ENCODE measurements at regions of chr16 and their contacts with region 1.

Region 1: GRCh38 chr16:31142109-31143010 is 6.8 kb upstream of the PRSS8 start:
- DNase-seq: peak; percentile 94 to 97 (median 96)
- H3K4me3 ChIP-seq: peak overlapping the region in 1 of 2 donors; percentile 75
- H3K4me3 Mint-ChIP-seq: peak overlapping the region; percentile 63 to 80 (median 74)
- H3K27ac ChIP-seq: peak overlapping the region; percentile 42
- H3K27ac Mint-ChIP-seq: peak overlapping the region; percentile 72 to 94 (median 91)
- H3K4me1 ChIP-seq: peaks cover 15% of the 10 kb centered on the region
- H3K4me1 Mint-ChIP-seq: peaks cover 3 to 14% (median 10%) of the 10 kb centered on the region in 4 donors
- H3K27me3 ChIP-seq: no peaks in the 10 kb centered on the region
- H3K27me3 Mint-ChIP-seq: no peaks in the 10 kb centered on the region

Region 2: DNA sequence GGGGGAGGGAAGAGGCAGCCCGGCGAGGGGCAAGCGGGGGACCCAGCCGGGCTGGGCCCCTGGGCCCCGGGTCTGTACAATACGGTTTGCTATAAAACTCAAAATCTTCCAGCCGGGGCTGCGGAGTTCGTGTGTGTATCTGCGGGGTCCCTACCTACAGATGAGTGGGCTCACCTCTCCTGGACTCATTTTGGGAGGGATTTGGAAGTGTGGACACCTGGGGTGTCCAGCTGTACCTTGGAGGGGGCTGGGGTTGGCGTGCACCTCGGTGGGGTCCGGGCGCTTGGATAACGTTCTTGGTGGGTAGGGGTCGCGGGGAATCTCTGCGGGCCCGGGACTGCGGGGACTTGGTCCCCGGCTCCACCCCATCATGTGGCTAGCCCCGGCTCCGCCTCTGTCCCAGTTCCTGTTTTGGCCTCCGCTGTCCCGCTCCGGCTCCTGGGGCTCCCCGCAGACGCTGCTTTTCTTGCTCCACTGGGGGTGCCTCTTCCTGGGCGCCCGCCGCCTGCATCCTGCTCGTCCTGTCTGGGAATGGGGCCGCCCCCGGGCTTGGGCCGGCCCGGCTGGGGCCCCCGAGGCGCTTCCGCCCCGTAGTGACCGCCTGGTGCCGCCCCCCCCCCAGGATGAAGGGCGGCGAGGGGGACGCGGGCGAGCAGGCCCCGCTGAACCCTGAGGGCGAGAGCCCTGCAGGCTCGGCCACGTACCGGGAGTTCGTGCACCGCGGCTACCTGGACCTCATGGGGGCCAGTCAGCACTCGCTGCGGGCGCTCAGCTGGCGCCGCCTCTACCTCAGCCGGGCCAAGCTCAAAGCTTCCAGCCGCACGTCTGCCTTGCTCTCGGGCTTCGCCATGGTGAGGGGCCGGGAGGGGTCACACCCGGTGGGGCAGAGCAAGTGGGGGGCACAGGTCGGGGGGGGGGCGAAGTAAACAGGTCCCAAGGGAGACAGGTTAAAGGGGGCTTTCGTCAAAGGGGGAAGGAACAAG is 193.4 kb before region 1 on chr16 and contains the start of gene ORAI3:
- CTCF ChIA-PET with region 1: interaction called, 13 read pairs
- POLR2A ChIA-PET with region 1: interaction called, 10 read pairs
- intact Hi-C with region 1: no loop called
- DNase-seq: peak in 4 of 5 donors; percentile 21 to 56 (median 28)
- H3K4me3 ChIP-seq: peak within 1 kb of the TSS; percentile 55 to 80
- H3K4me3 Mint-ChIP-seq: peak within 1 kb of the TSS; percentile 85 to 95 (median 92)
- H3K27ac ChIP-seq: peak within 1 kb of the TSS; percentile 71
- H3K27ac Mint-ChIP-seq: peak within 1 kb of the TSS; percentile 76 to 94 (median 89)
- H3K4me1 ChIP-seq: peaks cover 22% of the 10 kb centered on the region
- H3K4me1 Mint-ChIP-seq: peaks cover 11 to 31% (median 23%) of the 10 kb centered on the region in 4 donors
- H3K27me3 ChIP-seq: no peaks in the 10 kb centered on the region
- H3K27me3 Mint-ChIP-seq: no peaks in the 10 kb centered on the region
- total RNA-seq, gene ORAI3: 19.3 to 22.0 TPM

Region 3: GRCh38 chr16:30997000-30997886 is 145.1 kb before region 1 on chr16:
- CTCF ChIA-PET with region 1: interaction called, 4 read pairs
- POLR2A ChIA-PET with region 1: interaction called, 5 read pairs
- intact Hi-C with region 1: loop called (anchors 1 kb)
- DNase-seq: peak; percentile 59 to 82 (median 66)
- H3K4me3 ChIP-seq: peak overlapping the region; percentile 60 to 69
- H3K4me3 Mint-ChIP-seq: peak overlapping the region; percentile 67 to 86 (median 82)
- H3K27ac ChIP-seq: peak overlapping the region; percentile 47
- H3K27ac Mint-ChIP-seq: peak overlapping the region in 6 of 7 donors; percentile 54 to 89 (median 85)
- H3K4me1 ChIP-seq: peaks cover 11% of the 10 kb centered on the region
- H3K4me1 Mint-ChIP-seq: peaks cover 2 to 6% (median 4%) of the 10 kb centered on the region in 4 donors
- H3K27me3 ChIP-seq: no peaks in the 10 kb centered on the region
- H3K27me3 Mint-ChIP-seq: no peaks in the 10 kb centered on the region

Region 4: DNA sequence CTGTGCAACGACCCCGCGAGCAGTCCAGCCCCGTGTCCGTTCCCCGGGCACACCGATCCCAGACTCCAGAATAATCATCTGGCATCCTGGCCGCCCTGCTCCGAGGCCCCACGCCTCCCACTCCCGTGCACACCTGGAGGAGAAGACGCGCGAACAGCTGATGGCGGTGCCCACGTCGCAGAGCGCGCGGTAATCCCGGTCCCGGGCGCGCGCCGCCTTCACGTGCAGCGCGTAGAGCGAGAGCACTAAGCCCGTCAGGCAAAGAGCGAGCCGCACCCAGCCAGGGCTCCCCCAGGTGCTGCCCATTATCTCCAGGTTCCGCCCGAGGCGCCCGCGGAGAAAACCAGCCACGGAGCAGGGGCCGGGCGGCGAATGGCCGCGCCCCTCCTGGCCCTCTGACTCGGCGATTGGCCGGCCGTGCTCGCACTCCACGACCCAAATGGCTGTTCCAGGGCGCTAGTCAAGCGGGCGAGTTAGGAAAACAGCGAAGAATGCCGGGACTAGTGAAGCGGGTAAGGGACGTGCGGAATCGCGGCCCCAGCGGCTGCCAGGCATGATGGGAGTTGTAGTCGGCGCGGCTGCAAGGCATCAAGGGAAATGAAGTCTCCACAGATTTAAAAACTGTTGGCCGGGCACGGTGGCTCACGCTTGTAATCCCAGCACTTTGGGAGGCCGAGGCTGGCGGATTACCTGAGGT is 47.8 kb before region 1 on chr16 and contains the start of gene VKORC1:
- CTCF ChIA-PET with region 1: interaction called, 6 read pairs
- POLR2A ChIA-PET with region 1: interaction called, 17 read pairs
- intact Hi-C with region 1: loop called (anchors 1 kb)
- DNase-seq: peak; percentile 87 to 92 (median 90)
- H3K4me3 ChIP-seq: peak within 1 kb of the TSS; percentile 63 to 98
- H3K4me3 Mint-ChIP-seq: peak within 1 kb of the TSS; percentile 88 to 96 (median 92)
- H3K27ac ChIP-seq: peak within 1 kb of the TSS; percentile 74
- H3K27ac Mint-ChIP-seq: peak within 1 kb of the TSS; percentile 76 to 99 (median 95)
- H3K4me1 ChIP-seq: peaks cover 22% of the 10 kb centered on the region
- H3K4me1 Mint-ChIP-seq: peaks cover 12 to 42% (median 30%) of the 10 kb centered on the region in 4 donors
- H3K27me3 ChIP-seq: no peaks in the 10 kb centered on the region
- H3K27me3 Mint-ChIP-seq: no peaks in the 10 kb centered on the region
- total RNA-seq, gene VKORC1: 48.9 to 51.3 TPM

Region 5: GRCh38 chr16:31125844-31126243 is 16.5 kb before region 1 on chr16:
- CTCF ChIA-PET with region 1: interaction called, 56 read pairs
- POLR2A ChIA-PET with region 1: interaction called, 121 read pairs
- intact Hi-C with region 1: no loop called
- DNase-seq: no peak
- H3K4me3 ChIP-seq: no peak overlapping the region
- H3K4me3 Mint-ChIP-seq: no peak overlapping the region
- H3K27ac ChIP-seq: no peak overlapping the region
- H3K27ac Mint-ChIP-seq: peak overlapping the region in 2 of 7 donors; percentile 48 to 75
- H3K4me1 ChIP-seq: no peaks in the 10 kb centered on the region
- H3K4me1 Mint-ChIP-seq: peaks cover 0 to 5% (median 0%) of the 10 kb centered on the region in 4 donors
- H3K27me3 ChIP-seq: no peaks in the 10 kb centered on the region
- H3K27me3 Mint-ChIP-seq: no peaks in the 10 kb centered on the region

Region 6: DNA sequence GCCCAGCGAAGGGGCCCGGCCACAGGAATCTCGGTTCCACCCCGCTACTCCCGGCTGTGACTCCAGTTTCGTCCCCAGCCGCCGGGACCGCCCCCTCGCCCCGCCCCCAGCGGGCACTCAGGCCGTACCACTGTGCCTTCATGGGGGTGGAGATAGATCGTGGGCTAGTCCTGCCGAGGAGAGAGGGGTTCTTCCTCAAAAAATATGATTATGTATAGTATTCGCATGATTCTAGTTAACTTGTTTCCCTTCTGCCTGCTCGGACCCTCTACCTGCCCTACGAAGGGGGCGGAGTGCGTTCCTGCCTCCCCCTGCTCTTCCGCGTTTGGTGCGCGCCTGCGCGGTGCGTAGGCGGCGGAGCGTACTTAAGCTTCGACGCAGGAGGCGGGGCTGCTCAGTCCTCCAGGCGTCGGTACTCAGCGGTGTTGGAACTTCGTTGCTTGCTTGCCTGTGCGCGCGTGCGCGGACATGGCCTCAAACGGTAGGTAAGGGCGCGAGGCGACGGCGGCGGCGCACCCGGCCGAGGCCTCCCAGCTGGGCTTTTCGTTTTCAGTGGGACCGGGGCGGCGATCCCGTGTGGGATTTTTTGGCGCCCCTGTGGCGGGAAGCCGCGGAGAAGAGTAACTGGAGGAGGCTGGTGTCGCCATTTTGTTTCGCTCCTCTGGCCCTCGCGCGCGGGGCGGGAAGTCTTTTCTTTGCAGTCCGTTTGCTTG is 37.5 kb after region 1 on chr16 and contains the start of gene FUS:
- CTCF ChIA-PET with region 1: interaction called, 32 read pairs
- POLR2A ChIA-PET with region 1: interaction called, 195 read pairs
- intact Hi-C with region 1: loop called (anchors 1 kb)
- DNase-seq: peak; percentile 89 to 95 (median 94)
- H3K4me3 ChIP-seq: peak within 1 kb of the TSS; percentile 96 to 97
- H3K4me3 Mint-ChIP-seq: peak within 1 kb of the TSS; percentile 97 to 99 (median 98)
- H3K27ac ChIP-seq: peak within 1 kb of the TSS; percentile 89
- H3K27ac Mint-ChIP-seq: peak within 1 kb of the TSS; percentile 95 to 100 (median 99)
- H3K4me1 ChIP-seq: peaks cover 66% of the 10 kb centered on the region
- H3K4me1 Mint-ChIP-seq: peaks cover 41 to 77% (median 54%) of the 10 kb centered on the region in 4 donors
- H3K27me3 ChIP-seq: no peaks in the 10 kb centered on the region
- H3K27me3 Mint-ChIP-seq: no peaks in the 10 kb centered on the region
- total RNA-seq, gene FUS: 500 to 536 TPM

Region 7: DNA sequence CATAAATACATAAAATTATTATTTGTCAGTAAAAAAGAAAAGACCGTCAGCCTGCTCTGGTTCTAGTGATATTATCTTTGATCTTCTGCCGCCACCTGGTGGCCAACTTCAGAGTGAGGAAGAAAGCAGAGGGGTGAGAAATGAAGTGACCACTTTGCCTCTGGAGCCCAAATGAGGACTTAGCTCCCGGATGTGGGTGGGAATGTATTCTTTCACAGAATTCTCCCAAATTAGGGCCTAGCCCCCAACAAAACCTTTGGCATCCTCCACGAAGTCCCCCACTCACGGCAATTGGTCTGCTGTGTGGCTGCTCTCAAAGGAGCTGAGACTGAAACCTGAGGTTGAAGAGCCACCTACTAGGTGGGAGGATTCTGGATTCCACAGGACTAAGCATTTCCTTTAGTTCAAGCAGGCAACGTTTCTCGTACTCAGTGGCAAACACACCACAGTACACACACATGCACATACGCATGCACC is 726.4 kb after region 1 on chr16:
- CTCF ChIA-PET with region 1: interaction called, 12 read pairs
- POLR2A ChIA-PET with region 1: interaction called, 7 read pairs
- intact Hi-C with region 1: no loop called
- DNase-seq: peak; percentile 74 to 85 (median 78)
- H3K4me3 ChIP-seq: peak overlapping the region; percentile 65 to 67
- H3K4me3 Mint-ChIP-seq: peak overlapping the region; percentile 71 to 84 (median 78)
- H3K27ac ChIP-seq: peak overlapping the region; percentile 71
- H3K27ac Mint-ChIP-seq: peak overlapping the region; percentile 74 to 96 (median 92)
- H3K4me1 ChIP-seq: peaks cover 44% of the 10 kb centered on the region
- H3K4me1 Mint-ChIP-seq: peaks cover 31 to 50% (median 38%) of the 10 kb centered on the region in 4 donors
- H3K27me3 ChIP-seq: no peaks in the 10 kb centered on the region
- H3K27me3 Mint-ChIP-seq: no peaks in the 10 kb centered on the region